ENCODE measurements at regions of chrX and their contacts with region 1.

Region 1: DNA sequence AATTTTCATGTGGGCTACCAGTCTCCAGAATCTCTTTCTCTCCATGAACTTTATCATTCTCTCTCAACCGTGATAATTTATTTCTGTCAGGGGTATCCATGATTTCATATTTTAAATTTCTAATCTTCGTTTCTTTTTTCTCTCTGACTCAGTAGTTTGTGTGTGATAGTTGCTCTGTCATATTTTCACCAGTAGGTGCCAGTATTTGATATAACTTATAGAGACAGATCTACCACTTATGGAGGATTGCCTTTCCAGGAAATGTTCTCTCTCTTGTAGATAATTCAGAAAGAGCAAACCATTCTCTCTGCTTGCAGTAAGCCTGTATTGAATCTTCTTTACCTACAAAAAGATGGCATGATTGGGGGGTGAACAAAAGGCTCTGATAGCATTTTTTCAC is 79.3 kb upstream of the DYNLT3 start:
- DNase-seq: no peak
- H3K4me3 ChIP-seq: no peak overlapping the region
- H3K27ac ChIP-seq: no peak overlapping the region
- H3K4me1 ChIP-seq: no peaks in the 10 kb centered on the region
- H3K27me3 ChIP-seq: no peaks in the 10 kb centered on the region
- CTCF ChIP-seq: peak; percentile 59

Region 2: GRCh38 chrX:37423860-37424464 is 502.7 kb before region 1 on chrX:
- intact Hi-C with region 1: no loop called
- DNase-seq: no peak
- H3K4me3 ChIP-seq: no peak overlapping the region
- H3K27ac ChIP-seq: peak overlapping the region; percentile 50
- H3K4me1 ChIP-seq: no peaks in the 10 kb centered on the region
- H3K27me3 ChIP-seq: no peaks in the 10 kb centered on the region
- CTCF ChIP-seq: no peak

Region 3: GRCh38 chrX:38166478-38167083 is 239.9 kb after region 1 on chrX:
- intact Hi-C with region 1: loop called (anchors 5 kb)
- DNase-seq: no peak
- H3K4me3 ChIP-seq: no peak overlapping the region
- H3K27ac ChIP-seq: no peak overlapping the region
- H3K4me1 ChIP-seq: no peaks in the 10 kb centered on the region
- H3K27me3 ChIP-seq: no peaks in the 10 kb centered on the region
- CTCF ChIP-seq: peak; percentile 61

Measured in left ventricle myocardium inferior (tissue), 1 donor.